Testis (tissue), 5 donors: ENCODE measurements at regions of chr11 and their contacts with region 1.

Region 1: DNA sequence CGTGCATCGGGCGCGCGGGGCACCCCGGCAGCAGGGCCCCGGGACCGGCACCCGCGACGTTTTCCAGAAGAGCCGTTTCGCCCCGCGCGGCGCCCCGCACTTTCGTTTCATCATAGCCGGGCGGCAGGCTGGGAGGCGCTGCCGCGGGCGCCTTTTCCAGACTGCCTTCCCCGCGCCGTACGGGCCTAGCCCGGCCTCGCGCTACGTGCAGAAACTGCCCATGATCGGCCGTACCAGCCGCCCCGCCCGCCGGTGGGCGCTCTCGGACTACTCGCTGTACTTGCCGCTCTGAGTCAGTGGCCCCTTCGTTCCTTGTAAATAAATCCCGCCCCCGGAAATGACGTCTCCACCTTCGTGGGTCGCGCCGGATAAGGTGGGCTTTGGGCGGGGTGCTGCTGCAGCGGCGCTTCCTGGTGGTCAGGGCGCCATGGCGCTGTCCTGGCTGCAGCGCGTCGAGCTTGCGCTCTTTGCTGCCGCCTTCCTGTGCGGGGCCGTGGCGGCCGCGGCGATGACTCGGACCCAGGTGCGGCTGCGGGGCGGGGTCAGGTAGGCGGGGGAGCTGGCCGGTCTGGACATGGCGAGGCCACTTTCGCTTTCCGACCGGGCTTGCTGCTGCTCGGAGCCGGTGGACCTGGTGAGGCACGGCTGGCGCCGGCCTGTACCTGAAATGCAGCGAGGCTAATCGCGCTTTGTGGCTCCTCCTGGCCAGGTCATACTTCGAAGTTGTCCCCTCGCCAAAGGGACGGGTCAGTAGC is at the start of gene TMEM179B:
- DNase-seq: peak; percentile 100
- H3K4me3 ChIP-seq: peak within 1 kb of the TSS; percentile 80 to 98
- H3K27ac ChIP-seq: peak within 1 kb of the TSS; percentile 77 to 97
- H3K4me1 ChIP-seq: peaks cover 22% of the 10 kb centered on the region
- H3K27me3 ChIP-seq: no peaks in the 10 kb centered on the region
- CTCF ChIP-seq: peak in 2 of 3 experiments; percentile 52 to 62
- POLR2A ChIP-seq: peak; percentile 94
- total RNA-seq, gene TMEM179B: 119 to 124 TPM

Region 2: GRCh38 chr11:62732801-62733200 is 54.4 kb before region 1 on chr11:
- intact Hi-C with region 1: no loop called
- DNase-seq: no peak
- H3K4me3 ChIP-seq: no peak overlapping the region
- H3K27ac ChIP-seq: no peak overlapping the region
- H3K4me1 ChIP-seq: peaks cover 14% of the 10 kb centered on the region
- H3K27me3 ChIP-seq: no peaks in the 10 kb centered on the region
- CTCF ChIP-seq: no peak
- POLR2A ChIP-seq: no peak

Region 3: DNA sequence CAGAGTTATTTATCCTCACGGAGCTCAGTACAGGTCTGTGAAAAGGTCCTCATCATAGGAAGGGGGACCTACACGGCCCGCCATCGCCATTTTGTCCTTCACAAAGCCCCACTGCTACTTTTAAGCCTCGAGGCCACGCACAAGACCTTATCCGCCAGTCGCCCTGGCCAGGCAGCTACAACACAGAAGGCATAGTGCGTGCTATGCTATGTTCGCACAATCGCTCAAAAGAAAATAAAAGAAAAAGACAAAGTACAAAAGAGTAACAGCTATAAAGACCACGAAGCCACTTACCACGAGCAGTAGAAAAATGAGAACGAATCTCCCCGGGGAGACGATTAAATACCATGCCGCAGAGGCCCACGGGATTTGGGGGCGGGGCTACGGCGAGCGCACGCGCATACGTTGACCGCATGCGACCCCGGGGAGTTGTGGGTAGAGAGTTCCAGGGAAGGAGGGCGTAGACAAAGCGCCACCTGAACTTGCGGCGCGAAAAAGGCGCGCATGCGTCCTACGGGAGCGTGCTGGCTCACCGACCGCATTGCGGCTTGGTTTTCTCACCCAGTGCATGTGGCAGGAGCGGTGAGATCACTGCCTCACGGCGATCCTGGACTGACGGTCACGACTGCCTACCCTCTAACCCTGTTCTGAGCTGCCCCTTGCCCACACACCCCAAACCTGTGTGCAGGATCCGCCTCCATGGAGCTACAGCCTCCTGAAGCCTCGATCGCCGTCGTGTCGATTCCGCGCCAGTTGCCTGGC is 68.6 kb after region 1 on chr11:
- intact Hi-C with region 1: loop called (anchors 10 kb)
- DNase-seq: peak; percentile 95
- H3K4me3 ChIP-seq: peak overlapping the region; percentile 77 to 89
- H3K27ac ChIP-seq: peak overlapping the region; percentile 75 to 83
- H3K4me1 ChIP-seq: peaks cover 31% of the 10 kb centered on the region
- H3K27me3 ChIP-seq: no peaks in the 10 kb centered on the region
- CTCF ChIP-seq: peak in 1 of 3 experiments; percentile 26
- POLR2A ChIP-seq: peak; percentile 63